AG04449 (cell line): ENCODE measurements at regions of chr1 and their contacts with region 1.

Region 1: GRCh38 chr1:247487057-247487456 is 29.2 kb upstream of the OR2B11 start:
- DNase-seq: no peak
- H3K4me3 ChIP-seq: no peak overlapping the region
- CTCF ChIP-seq: no peak

Region 2: DNA sequence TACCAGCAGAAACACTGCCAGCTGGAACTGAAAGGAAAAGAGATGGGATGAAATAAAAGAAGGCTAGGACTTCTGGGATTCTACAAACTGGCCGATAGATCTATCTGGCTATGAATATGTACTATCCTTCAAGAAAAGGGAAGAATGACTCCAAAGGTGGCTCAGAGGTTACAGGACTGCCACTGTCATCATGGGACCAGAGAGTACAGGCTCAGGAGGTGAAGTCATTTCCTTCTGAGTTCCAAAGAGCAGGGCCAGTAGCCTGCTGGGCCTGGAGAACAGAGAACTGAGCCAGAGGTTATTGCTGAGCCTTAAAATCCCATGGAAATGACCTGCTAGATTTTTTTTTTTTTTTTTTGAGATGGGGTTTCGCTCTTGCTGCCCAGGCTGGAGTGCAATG is 183.0 kb before region 1 on chr1:
- CTCF ChIA-PET with region 1: no interaction called
- POLR2A ChIA-PET with region 1: no interaction called
- DNase-seq: no peak
- H3K4me3 ChIP-seq: no peak overlapping the region
- CTCF ChIP-seq: no peak

Region 3: GRCh38 chr1:247390116-247390791 is 96.8 kb before region 1 on chr1:
- CTCF ChIA-PET with region 1: interaction called, 11 read pairs
- POLR2A ChIA-PET with region 1: no interaction called
- DNase-seq: no peak
- H3K4me3 ChIP-seq: peak overlapping the region; percentile 15; the same call in 1 of the 2 replicates
- CTCF ChIP-seq: peak; percentile 85